ENCODE measurements at regions of chr2 and their contacts with region 1.

Region 1: DNA sequence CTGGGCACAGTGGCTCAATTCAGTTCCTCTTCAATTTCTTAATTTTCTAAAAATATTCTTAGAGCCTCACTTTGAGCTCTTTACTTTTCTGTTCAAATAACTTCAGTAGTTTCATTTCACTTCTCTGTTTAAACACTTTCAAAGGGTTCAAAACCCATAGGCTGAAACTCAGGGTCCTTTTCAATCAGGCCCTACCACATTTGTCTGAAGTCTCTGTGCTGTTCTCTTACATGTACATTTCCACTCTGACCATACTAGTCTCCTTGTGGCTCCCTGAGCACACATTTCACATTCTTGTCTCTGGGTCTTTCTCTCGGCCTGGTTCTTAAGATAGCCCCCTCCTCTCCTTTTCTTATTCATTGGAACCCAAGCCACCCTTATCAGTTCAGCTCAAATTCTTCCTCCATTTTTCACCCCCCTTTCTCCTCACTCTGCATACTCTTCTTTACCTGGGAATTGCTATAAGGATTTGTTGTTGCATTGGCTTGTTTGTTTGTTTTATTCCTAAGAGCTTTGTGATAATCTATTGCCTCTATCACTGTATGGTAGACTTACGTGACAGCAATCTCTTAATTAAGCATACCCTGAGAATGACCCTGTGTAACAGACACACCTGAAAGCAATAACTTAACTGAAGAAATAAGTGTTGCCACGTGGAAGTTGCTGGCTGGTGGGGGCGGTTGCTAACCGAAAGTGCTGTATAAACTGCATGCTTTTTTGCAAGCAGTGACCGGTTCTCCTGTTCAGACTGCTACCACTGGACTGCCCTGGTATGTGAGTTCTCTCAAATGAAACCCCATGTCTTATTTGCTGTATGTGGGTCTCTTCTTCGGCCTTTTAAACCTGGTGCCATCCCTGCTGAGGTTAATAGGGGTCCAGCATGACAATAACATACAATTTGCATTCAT is 27.7 kb upstream of the ACADL start:
- DNase-seq: no peak
- ATAC-seq: no peak
- H3K4me3 ChIP-seq: no peak overlapping the region
- H3K27ac ChIP-seq: no peak overlapping the region
- H3K4me1 ChIP-seq: no peaks in the 10 kb centered on the region
- H3K27me3 ChIP-seq: no peaks in the 10 kb centered on the region
- CTCF ChIP-seq: no peak
- POLR2A ChIP-seq: no peak

Region 2: GRCh38 chr2:210399440-210400041 is 146.6 kb after region 1 on chr2:
- intact Hi-C with region 1: loop called (anchors 10 kb)
- DNase-seq: no peak
- ATAC-seq: peak in 3 of 4 donors; percentile 35 to 54 (median 51)
- H3K4me3 ChIP-seq: no peak overlapping the region
- H3K27ac ChIP-seq: no peak overlapping the region
- H3K4me1 ChIP-seq: no peaks in the 10 kb centered on the region
- H3K27me3 ChIP-seq: no peaks in the 10 kb centered on the region
- CTCF ChIP-seq: peak; percentile 42 to 63 (median 50)
- POLR2A ChIP-seq: no peak

Measured in right lobe of liver (tissue), 6 donors.